Left ventricle myocardium inferior (tissue), 1 donor: ENCODE measurements at regions of chr6 and their contacts with region 1.

Region 1: DNA sequence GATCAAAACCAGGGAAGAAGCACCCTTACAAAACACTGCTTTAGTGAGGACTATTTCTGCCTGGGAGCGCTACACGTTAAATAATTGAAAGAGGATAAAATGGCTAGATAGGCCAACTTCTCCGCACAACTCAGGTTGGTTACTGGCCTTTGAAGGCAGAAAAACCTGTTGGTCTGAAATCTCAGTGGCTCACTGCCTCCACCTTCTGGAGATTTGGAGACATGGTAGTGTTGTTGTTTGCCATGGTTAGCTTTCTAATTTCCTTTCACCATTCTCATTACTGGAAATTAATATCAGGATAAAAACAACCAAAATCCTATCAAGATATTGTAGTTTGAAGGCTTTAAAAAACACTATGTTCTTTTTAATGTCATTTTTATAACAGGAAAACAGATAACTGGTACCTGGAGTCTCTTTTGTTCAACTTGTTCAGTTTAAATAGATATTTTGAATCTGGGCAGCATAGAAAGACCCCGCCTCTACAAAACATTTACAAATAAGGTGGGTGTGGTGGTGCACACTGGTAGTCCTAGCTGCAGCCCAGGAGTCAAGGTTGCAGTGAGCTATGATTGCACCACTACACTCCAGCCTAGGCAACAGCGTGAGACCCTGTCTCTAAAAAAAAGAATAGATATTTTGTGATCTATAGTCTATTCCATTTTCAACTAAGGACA is 27.5 kb upstream of the BCLAF1 start:
- DNase-seq: no peak
- H3K4me3 ChIP-seq: no peak overlapping the region
- H3K27ac ChIP-seq: no peak overlapping the region
- H3K4me1 ChIP-seq: no peaks in the 10 kb centered on the region
- H3K27me3 ChIP-seq: peaks cover 7% of the 10 kb centered on the region
- CTCF ChIP-seq: peak; percentile 90

Region 2: DNA sequence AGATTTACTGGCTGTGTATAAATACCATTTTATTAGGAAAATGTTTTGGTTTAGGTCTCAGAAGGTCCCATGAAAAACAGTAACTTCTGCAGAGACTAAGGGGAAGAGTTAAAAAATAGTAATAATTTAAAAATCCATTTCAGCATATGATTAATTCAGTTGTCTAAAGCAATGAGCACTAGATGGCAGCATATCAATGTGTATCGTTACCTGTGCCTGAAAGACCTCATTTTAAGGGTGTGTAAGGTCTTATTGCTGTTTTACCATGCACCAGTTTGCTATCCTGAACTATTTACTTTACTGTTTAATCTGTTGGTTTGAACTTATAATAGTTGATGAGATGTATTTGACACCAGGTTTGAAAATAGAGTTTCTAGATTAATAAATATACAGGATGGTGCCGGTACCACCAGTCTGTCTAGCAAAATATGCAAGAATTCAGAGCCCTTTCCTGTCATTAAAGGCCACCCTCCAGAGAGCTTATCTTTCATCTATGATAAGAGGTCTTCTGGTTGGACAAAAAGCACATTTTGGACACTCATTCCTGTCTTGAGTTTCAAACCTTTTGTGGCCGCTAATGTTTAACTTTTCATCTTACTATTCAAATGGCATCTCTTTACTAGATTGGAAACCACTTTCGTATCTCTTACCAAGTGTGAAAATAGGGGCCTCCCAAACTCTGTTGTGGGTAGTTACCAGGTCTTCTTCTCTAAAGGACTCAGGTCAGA is 810.7 kb before region 1 on chr6:
- intact Hi-C with region 1: loop called (anchors 10 kb)
- DNase-seq: no peak
- H3K4me3 ChIP-seq: no peak overlapping the region
- H3K27ac ChIP-seq: no peak overlapping the region
- H3K4me1 ChIP-seq: no peaks in the 10 kb centered on the region
- H3K27me3 ChIP-seq: no peaks in the 10 kb centered on the region
- CTCF ChIP-seq: peak; percentile 69